GM10248 (cell line): ENCODE measurements at regions of chr19 and their contacts with region 1.

Region 1: GRCh38 chr19:56252699-56253422 is 19.7 kb upstream of the EDDM13 start:
- DNase-seq: peak; percentile 66
- CTCF ChIP-seq: peak; percentile 79

Region 2: GRCh38 chr19:55973982-55974381 is 278.9 kb before region 1 on chr19:
- CTCF ChIA-PET with region 1: no interaction called
- POLR2A ChIA-PET with region 1: no interaction called
- DNase-seq: no peak
- CTCF ChIP-seq: no peak

Region 3: GRCh38 chr19:56080669-56081401 is 172.0 kb before region 1 on chr19:
- CTCF ChIA-PET with region 1: interaction called, 45 read pairs
- POLR2A ChIA-PET with region 1: no interaction called
- DNase-seq: peak; percentile 91
- CTCF ChIP-seq: peak; percentile 67

Region 4: DNA sequence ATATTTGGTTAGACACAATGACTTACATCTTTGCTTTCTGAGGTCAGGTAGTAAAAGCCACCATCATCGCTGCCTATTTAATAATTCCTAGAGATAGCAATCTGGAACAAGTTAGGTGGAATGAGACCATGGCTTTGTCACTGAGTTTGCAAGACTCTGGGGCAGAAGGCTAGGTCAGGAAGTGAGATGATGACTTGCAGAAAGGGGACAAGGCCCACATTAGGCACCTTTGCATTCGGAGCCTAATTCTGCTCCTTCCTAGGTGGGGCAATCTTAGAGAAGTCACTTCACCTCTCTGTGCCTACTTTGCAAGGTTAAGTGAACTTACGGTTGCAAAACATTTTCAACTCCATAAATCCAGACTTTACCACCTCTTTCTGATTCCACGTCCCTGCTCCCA is 29.9 kb after region 1 on chr19:
- CTCF ChIA-PET with region 1: interaction called, 16 read pairs
- POLR2A ChIA-PET with region 1: no interaction called
- DNase-seq: no peak
- CTCF ChIP-seq: no peak

Region 5: DNA sequence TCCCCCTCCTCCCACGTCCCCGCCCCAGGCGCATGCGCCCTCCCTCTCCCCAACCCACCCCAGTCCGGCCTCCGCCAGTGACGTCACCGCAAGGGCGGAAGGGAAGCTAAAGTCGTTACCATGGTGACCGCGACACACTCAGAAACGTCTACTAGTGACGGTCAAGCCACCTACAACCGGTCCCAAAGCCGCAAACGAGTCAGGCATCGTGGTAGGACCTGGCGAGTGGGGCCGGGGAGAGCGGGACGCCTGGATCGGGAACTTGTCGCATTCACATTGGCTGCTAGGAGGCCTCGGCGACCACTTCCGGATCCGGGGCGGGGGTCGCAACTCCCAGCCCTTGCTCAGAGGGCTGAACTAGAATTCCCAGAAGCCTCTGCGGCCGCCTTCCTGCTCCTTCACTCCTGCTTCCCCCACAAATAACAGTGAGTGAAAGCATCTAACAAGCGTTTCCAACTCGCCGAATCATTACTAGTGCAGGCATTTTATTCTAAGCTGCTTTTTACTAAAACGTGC is 61.8 kb after region 1 on chr19 and contains the start of gene ZSCAN5A:
- CTCF ChIA-PET with region 1: interaction called, 29 read pairs
- POLR2A ChIA-PET with region 1: no interaction called
- DNase-seq: peak; percentile 95
- CTCF ChIP-seq: no peak